Ascending aorta (tissue), 2 donors: ENCODE measurements at regions of chr18 and their contacts with region 1.

Region 1: GRCh38 chr18:51355841-51356240 is 158.4 kb upstream of the MEX3C start:
- DNase-seq: no peak
- H3K4me3 ChIP-seq: no peak overlapping the region
- H3K27ac ChIP-seq: no peak overlapping the region
- H3K4me1 ChIP-seq: no peaks in the 10 kb centered on the region
- H3K27me3 ChIP-seq: no peaks in the 10 kb centered on the region
- CTCF ChIP-seq: no peak

Region 2: DNA sequence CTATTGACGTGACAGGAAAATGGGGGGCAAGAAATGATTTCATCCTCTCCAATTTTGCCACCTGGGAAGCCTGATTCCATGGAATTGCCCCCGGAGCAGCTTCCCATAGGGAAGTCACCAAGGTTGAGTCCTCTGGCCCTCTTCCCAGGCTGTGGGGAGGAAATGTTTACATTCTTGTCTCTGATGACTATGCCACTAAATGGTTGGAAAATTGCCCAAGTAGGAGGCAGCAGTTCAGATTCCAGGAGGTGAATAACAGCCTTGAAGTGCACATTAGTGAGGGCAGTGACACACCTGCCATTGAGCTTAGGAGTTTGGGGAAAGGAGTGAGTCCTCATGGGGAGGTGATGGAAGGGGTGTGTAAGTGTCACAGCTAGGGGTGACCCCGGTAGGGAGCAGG is 534.9 kb after region 1 on chr18:
- intact Hi-C with region 1: loop called (anchors 5 kb)
- DNase-seq: no peak
- H3K4me3 ChIP-seq: no peak overlapping the region
- H3K27ac ChIP-seq: no peak overlapping the region
- H3K4me1 ChIP-seq: no peaks in the 10 kb centered on the region
- H3K27me3 ChIP-seq: no peaks in the 10 kb centered on the region
- CTCF ChIP-seq: no peak